ENCODE measurements at regions of chr12 and their contacts with region 1.

Region 1: GRCh38 chr12:50763639-50764285 is at the start of gene ATF1:
- DNase-seq: peak; percentile 61
- ATAC-seq: peak; percentile 95
- H3K4me3 ChIP-seq: peak within 1 kb of the TSS; percentile 87 to 89
- H3K27ac ChIP-seq: peak within 1 kb of the TSS; percentile 86
- H3K4me1 ChIP-seq: peaks cover 25% of the 10 kb centered on the region
- H3K27me3 ChIP-seq: no peaks in the 10 kb centered on the region
- CTCF ChIP-seq: no peak
- total RNA-seq, gene ATF1: 52.2 TPM

Region 2: GRCh38 chr12:50411051-50411660 is 352.6 kb before region 1 on chr12:
- CTCF ChIA-PET with region 1: interaction called, 14 read pairs
- POLR2A ChIA-PET with region 1: no interaction called
- in situ Hi-C with region 1: no loop called
- intact Hi-C with region 1: no loop called
- DNase-seq: no peak
- ATAC-seq: no peak
- H3K4me3 ChIP-seq: no peak overlapping the region
- H3K27ac ChIP-seq: no peak overlapping the region
- H3K4me1 ChIP-seq: no peaks in the 10 kb centered on the region
- H3K27me3 ChIP-seq: no peaks in the 10 kb centered on the region
- CTCF ChIP-seq: no peak

Region 3: DNA sequence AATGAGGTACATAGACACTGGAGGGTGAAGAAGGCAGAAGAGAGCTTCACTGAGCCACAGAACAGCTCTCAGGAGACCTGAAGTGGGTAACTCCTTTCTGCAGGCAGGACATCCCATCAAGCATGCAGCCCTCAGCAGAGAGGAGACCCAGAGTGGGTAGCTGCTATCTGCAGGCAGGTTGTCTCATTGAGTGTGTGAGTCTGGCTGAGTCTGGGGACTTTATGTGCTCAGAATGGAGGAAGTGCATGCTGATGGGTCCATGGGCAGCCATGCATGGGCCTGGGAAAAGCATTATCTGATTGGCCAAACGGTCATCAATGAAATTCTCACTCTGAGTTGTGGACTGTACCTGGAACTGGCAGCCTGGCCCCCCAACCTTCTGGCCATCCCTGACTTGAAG is 173.9 kb after region 1 on chr12:
- CTCF ChIA-PET with region 1: no interaction called
- POLR2A ChIA-PET with region 1: interaction called, 14 read pairs
- in situ Hi-C with region 1: no loop called
- intact Hi-C with region 1: no loop called
- DNase-seq: no peak
- ATAC-seq: no peak
- H3K4me3 ChIP-seq: no peak overlapping the region
- H3K27ac ChIP-seq: no peak overlapping the region
- H3K4me1 ChIP-seq: no peaks in the 10 kb centered on the region
- H3K27me3 ChIP-seq: no peaks in the 10 kb centered on the region
- CTCF ChIP-seq: no peak